Gastrocnemius medialis (tissue), 4 donors: ENCODE measurements at regions of chr20 and their contacts with region 1.

Region 1: GRCh38 chr20:63739130-63740069 is at the start of gene SLC2A4RG:
- DNase-seq: peak; percentile 54 to 72
- ATAC-seq: peak; percentile 59 to 67
- H3K4me3 ChIP-seq: peak within 1 kb of the TSS; percentile 58 to 91 (median 74)
- H3K27ac ChIP-seq: peak within 1 kb of the TSS; percentile 95 to 99 (median 97)
- H3K4me1 ChIP-seq: peaks cover 17 to 32% of the 10 kb centered on the region in 2 donors
- H3K27me3 ChIP-seq: no peaks in the 10 kb centered on the region
- CTCF ChIP-seq: no peak
- POLR2A ChIP-seq: peak; percentile 32 to 33
- total RNA-seq, gene SLC2A4RG: 26.0 to 58.7 (median 39.1) TPM

Region 2: GRCh38 chr20:63641792-63642544 is 97.4 kb before region 1 on chr20:
- in situ Hi-C with region 1: no loop called
- intact Hi-C with region 1: loop called (anchors 5 kb)
- DNase-seq: peak; percentile 82 to 83
- ATAC-seq: peak; percentile 80 to 82
- H3K4me3 ChIP-seq: peak overlapping the region; percentile 60 to 70 (median 62)
- H3K27ac ChIP-seq: peak overlapping the region; percentile 72 to 78 (median 76)
- H3K4me1 ChIP-seq: peaks cover 9 to 10% of the 10 kb centered on the region in 2 donors
- H3K27me3 ChIP-seq: no peaks in the 10 kb centered on the region
- CTCF ChIP-seq: peak in 4 of 5 experiments; percentile 39 to 67 (median 48)
- POLR2A ChIP-seq: no peak

Region 3: DNA sequence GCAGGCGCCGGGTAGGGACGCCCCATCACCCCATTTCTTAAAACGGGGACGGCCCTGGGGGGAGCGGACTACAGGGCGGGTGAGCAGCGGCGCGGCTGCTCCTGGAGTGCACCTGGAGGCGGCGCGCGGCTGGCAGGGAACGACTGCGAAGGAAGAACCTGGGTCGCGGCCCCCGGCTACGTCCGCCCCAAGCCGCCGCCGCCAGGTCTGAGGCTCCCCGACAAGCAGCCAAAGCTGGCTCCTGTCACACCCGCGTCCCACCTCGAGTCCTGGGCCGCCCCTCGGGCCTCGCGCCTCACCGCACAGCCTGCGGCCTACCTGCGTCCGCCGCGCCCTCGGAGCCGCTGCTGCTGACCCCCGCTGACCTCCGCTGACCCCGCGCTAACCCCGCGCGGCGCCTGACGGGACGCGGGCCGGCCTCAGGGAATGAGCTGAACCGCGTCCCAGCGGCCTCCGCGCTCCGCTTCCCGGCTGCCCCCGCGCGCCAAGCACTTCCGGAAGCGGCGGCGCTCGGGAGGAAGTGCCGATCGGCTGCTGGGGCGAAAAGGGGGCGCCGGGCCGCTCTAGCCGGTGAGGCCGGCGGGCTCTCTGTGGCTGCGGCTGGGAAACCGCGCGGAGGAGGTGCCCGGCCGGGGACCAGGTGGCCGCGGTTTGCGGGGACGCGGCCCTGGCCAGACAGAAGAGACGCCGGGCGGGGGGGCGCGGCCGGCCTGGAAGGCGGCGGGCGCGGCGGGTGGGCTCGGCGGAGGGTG is 31.7 kb before region 1 on chr20 and contains the starts of genes ARFRP1 and ZGPAT:
- in situ Hi-C with region 1: no loop called
- intact Hi-C with region 1: loop called (anchors 1 kb)
- DNase-seq: peak; percentile 81 to 86
- ATAC-seq: peak; percentile 93 to 95
- H3K4me3 ChIP-seq: peak within 1 kb of the TSS; percentile 76 to 90 (median 85)
- H3K27ac ChIP-seq: peak within 1 kb of the TSS; percentile 80 to 91 (median 90)
- H3K4me1 ChIP-seq: peaks cover 11 to 23% of the 10 kb centered on the region in 2 donors
- H3K27me3 ChIP-seq: no peaks in the 10 kb centered on the region
- CTCF ChIP-seq: peak in 1 of 5 experiments; percentile 14
- POLR2A ChIP-seq: peak; percentile 53 to 77
- total RNA-seq, gene ARFRP1: 26.9 to 35.1 (median 27.8) TPM
- total RNA-seq, gene ZGPAT: 13.4 to 20.8 (median 15.5) TPM

Region 4: DNA sequence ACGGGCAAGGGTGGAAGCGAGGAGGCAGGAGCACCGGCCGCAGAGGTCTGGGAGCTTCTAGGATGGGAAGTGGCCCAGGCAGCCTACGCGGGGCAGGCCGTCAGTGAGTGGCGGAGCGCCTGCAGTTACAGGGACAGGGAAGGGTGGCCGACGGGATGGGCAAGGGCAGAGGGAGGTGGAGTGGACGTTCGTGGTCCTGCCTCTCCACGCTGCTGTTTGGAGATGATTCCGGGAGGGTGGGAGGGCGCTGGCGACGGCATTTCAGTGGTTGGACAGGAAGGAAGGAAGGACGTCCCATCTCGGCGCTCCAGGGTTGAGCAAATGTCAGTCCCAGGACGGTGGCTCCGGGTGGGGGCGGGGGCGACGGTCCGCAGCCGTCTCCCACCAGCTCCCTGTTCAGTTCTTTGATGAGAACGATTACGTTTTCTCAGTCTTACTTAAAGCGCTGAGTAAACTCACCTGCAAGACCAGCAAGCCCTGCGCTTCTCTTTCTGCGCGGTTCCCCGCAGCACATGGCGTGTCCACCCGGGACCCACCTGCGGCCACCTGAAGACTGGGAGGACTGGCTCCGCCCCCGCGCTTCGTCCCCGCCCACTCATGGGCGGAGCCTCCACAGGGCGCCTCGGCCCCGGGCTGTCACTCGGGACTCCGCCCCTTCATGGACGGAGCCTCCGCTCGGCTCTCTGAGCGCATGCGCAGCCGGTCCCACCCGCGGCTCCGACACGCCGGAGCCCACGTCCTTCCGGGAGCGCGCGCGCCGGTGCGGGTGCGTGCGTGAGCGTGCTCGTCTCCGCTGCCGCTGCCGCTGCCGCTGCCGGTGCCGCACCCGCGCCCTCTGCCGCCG is 155.2 kb after region 1 on chr20 and contains the start of gene DNAJC5:
- in situ Hi-C with region 1: no loop called
- intact Hi-C with region 1: loop called (anchors 1 kb)
- DNase-seq: peak; percentile 91 to 94
- ATAC-seq: peak; percentile 90 to 92
- H3K4me3 ChIP-seq: peak within 1 kb of the TSS; percentile 63 to 66 (median 65)
- H3K27ac ChIP-seq: peak within 1 kb of the TSS; percentile 58 to 86 (median 78)
- H3K4me1 ChIP-seq: peaks cover 21 to 23% of the 10 kb centered on the region in 2 donors
- H3K27me3 ChIP-seq: no peaks in the 10 kb centered on the region
- CTCF ChIP-seq: no peak
- POLR2A ChIP-seq: peak; percentile 76 to 82
- total RNA-seq, gene DNAJC5: 18.5 to 26.4 (median 22.5) TPM